Cardiac septum (tissue), 1 donor: ENCODE measurements at regions of chr5 and their contacts with region 1.

Region 1: DNA sequence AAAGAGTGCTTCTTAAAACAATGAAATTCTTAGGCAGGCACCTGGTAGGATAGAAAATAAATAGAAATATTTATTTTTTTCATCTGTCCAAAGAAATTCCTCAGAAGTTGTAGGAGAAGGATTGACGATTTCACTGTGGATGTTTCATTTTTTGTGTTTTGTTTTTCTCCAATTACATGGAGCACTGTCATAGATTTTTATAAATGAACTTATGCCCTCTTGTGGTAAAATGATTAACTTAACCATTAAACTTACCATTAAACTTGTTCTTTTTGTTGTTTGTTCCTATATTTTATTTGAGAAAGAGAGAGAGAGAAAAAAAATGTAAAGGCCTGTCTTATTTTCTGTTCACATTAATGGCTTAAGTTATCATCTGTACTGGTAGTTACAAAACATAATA is 339.2 kb downstream of the PRR16 start:
- DNase-seq: no peak

Region 2: GRCh38 chr5:119943148-119943547 is 860.1 kb before region 1 on chr5:
- intact Hi-C with region 1: loop called (anchors 5 kb)
- DNase-seq: no peak

Region 3: DNA sequence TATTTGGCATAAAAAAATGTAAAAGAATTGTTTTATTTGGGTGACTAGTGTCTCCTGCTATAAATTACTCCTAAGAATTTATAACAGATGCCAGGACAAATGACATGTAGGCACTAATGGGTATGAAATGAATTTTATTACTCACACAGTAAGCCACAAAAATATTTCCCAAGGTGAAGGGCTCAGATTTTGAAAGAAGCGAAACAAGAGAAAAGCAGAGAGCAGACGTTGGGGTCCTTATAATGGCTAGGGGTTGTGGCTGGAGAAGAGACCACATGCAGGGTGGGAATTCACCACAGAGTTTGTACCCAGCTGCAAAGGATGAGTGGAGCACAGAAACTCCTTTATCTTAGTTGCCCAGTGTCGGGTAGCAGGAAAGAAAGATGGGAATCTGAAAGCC is 384.2 kb before region 1 on chr5:
- intact Hi-C with region 1: no loop called
- DNase-seq: no peak

Region 4: DNA sequence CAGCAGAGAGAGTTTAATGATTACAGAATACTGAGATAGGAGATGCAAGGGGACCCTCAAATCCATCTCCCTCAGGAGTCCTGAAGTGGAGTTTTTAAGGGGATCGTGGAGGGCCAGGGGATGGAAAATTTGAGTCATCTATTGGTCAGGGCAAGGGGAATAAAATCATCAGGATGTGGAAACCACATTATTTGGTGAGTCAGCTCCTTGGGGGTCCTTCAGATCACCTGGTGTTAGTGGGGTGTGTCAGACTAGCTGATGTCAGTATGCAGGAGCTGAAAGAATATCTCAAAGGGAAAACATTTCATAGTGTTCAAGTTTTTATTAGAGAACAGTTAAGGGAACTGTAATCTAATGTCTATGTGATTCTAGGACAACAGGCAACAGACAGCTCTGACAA is 865.4 kb after region 1 on chr5:
- intact Hi-C with region 1: no loop called
- DNase-seq: no peak